Cardiac septum (tissue), 1 donor: ENCODE measurements at regions of chr16 and their contacts with region 1.

Region 1: GRCh38 chr16:84144859-84145639 is at the starts of genes DNAAF1 and HSDL1:
- DNase-seq: peak; percentile 95
- total RNA-seq, gene DNAAF1: not detected
- total RNA-seq, gene HSDL1: 17.4 TPM

Region 2: DNA sequence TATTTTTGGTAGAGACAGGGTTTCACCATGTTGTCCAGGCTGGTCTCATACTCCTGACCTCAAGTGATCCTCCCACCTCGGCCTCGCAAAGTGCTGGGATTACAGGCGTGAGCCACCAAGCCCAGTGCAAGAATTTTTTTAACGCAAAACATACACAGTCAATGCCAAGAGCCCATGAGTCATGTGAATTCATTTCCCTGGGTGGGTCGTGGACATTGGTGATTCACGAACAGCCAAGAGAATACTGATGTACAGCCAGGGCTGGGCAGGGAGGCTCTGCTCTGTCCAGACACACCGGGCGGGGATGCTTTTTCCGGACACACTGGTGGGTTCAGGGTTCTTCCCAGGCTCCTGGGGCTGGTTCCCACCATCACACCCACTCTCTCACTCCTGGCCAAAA is 120.2 kb before region 1 on chr16:
- intact Hi-C with region 1: no loop called
- DNase-seq: no peak

Region 3: GRCh38 chr16:84116720-84117493 is 28.1 kb before region 1 on chr16 and contains the start of gene MBTPS1:
- intact Hi-C with region 1: loop called (anchors 2 kb)
- DNase-seq: peak; percentile 99
- total RNA-seq, gene MBTPS1: 53.2 TPM

Region 4: DNA sequence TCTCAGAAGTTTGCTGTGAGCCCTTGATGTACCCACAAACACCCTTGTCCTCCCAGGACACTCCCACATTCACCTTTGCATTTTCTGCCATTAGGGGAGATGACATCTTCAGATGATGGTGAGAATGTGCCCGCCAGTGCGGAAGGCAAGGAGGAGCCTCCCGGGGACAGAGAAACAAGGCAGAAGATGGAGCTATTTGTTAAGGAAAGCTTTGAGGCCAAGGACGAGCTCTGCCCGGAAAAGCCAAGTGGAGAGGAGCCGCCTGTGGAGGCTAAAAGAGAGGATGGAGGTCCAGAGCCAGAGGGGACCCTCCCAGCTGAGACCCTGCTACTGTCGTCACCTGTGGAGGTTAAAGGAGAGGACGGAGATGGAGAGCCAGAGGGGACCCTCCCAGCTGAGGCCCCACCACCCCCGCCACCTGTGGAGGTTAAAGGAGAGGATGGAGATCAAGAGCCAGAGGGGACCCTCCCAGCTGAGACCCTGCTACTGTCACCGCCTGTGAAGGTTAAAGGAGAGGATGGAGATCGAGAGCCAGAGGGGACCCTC is 24.8 kb after region 1 on chr16:
- intact Hi-C with region 1: no loop called
- DNase-seq: no peak

Region 5: GRCh38 chr16:84190731-84191388 is 45.8 kb after region 1 on chr16 and contains the start of gene ADAD2:
- intact Hi-C with region 1: no loop called
- DNase-seq: no peak
- total RNA-seq, gene ADAD2: 0.24 TPM